Ovary (tissue), 10 donors: ENCODE measurements at regions of chr12 and their contacts with region 1.

Region 1: GRCh38 chr12:22083167-22083566 is 37.1 kb downstream of the CMAS start:
- DNase-seq: peak in 1 of 5 donors; percentile 27
- H3K4me3 ChIP-seq: no peak overlapping the region
- H3K27ac ChIP-seq: no peak overlapping the region
- H3K4me1 ChIP-seq: no peaks in the 10 kb centered on the region
- H3K27me3 ChIP-seq: no peaks in the 10 kb centered on the region
- CTCF ChIP-seq: peak in 2 of 3 donors; percentile 51 to 54
- EP300 ChIP-seq: no peak
- POLR2A ChIP-seq: no peak

Region 2: DNA sequence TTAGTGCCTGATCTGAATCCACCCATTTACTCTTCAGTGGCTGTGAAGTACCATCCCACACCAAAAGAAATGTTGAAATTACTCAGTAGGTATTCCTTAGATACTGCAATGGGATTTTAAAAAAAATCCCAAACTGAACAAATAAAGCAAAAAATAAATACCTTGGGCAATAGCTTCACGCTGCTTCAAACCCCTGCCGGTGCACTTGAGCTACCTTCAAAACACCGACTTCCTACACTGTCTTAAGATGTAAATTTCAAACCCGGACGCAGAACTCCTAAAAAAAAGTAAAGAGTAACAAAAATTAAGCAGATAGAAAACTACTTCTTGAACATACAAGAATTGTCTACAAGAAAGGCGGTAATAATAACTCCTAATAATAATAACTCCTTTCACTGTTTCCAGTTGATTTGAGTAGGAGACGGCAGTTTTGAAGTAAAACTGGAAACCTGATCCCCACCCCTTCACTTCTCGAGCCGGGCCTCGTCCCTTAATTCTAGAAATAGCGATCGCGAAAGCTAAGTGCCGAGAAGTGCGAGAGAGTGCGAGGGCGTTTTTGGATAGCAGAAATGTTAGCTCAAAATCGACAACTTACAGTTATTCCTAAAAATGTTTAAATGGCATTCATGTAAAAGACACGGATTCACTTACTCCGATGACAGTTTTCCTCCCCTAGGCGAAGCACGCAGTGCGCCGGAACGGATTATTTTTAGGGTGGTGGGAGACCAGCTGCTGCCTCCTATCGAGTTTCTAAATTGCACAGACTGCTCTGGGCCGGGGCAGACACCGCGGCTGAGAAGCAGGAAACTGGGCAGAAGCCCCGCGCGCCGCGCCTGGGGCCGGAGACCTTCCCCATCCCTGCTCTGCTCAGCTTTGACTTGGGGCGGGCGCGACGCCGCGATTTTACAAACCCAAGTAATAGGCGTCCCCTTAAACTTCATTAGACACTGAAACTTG is 142.3 kb before region 1 on chr12 and contains the start of gene ABCC9:
- intact Hi-C with region 1: no loop called
- DNase-seq: peak; percentile 64 to 80 (median 72)
- H3K4me3 ChIP-seq: peak within 1 kb of the TSS; percentile 50
- H3K27ac ChIP-seq: peak within 1 kb of the TSS; percentile 73 to 75
- H3K4me1 ChIP-seq: peaks cover 2% of the 10 kb centered on the region
- H3K27me3 ChIP-seq: no peaks in the 10 kb centered on the region
- CTCF ChIP-seq: peak in 1 of 3 donors; percentile 18
- EP300 ChIP-seq: no peak
- POLR2A ChIP-seq: peak; percentile 40
- total RNA-seq, gene ABCC9: 15.6 to 54.8 (median 21.3) TPM

Region 3: GRCh38 chr12:22051114-22051698 is 32.0 kb before region 1 on chr12:
- intact Hi-C with region 1: no loop called
- DNase-seq: no peak
- H3K4me3 ChIP-seq: no peak overlapping the region
- H3K27ac ChIP-seq: no peak overlapping the region
- H3K4me1 ChIP-seq: peaks cover 5% of the 10 kb centered on the region
- H3K27me3 ChIP-seq: no peaks in the 10 kb centered on the region
- CTCF ChIP-seq: no peak
- EP300 ChIP-seq: no peak
- POLR2A ChIP-seq: no peak

Region 4: GRCh38 chr12:22130671-22131070 is 47.5 kb after region 1 on chr12:
- intact Hi-C with region 1: no loop called
- DNase-seq: no peak
- H3K4me3 ChIP-seq: no peak overlapping the region
- H3K27ac ChIP-seq: no peak overlapping the region
- H3K4me1 ChIP-seq: no peaks in the 10 kb centered on the region
- H3K27me3 ChIP-seq: no peaks in the 10 kb centered on the region
- CTCF ChIP-seq: no peak
- EP300 ChIP-seq: no peak
- POLR2A ChIP-seq: no peak

Region 5: DNA sequence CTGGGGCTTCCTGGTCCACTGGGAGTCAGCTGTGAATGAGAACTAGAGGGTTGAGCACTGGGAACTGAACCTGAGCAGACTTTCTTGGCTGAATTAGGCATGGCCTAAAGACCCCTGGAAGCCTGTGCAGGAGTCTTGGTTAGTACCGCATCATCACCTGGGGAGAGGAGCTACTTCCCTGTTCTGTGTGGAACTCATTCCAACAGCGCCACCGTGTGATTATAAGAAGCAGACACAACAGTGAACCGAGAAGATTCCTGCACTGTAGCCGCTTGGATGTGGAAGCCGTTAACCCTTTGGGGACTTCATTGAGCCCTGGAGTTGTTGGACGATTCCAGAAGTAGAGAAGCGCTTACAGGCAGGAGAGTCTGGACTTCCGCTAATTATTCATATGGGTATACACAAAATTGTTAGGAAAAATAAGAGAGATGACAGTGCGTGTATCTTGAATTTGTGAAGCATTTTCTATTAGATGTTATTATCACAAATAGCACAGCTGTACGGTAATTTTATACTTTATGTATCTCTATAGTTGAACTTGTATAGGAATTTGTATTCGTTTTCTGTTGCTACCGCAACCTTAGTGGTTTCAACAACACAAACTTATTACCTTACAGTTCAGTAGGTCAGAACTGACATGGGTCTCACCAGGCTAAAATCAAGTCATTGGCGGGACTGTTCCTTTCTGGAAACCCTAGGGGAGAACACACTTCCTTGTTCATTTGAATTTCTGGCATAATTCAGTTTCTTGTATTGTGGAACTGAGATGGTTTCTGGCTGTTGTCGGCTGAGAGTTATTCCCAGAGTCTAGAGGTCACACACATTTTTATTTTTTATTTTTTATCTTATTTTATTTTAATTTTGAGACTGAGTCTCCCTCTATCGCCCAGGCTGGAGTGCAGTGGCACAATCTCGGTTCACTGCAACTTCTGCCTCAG is 360.5 kb after region 1 on chr12:
- intact Hi-C with region 1: loop called in 3 of 4 experiments (anchors 5 to 10 kb)
- DNase-seq: peak; percentile 42 to 63 (median 47)
- H3K4me3 ChIP-seq: no peak overlapping the region
- H3K27ac ChIP-seq: no peak overlapping the region
- H3K4me1 ChIP-seq: no peaks in the 10 kb centered on the region
- H3K27me3 ChIP-seq: no peaks in the 10 kb centered on the region
- CTCF ChIP-seq: peak; percentile 43 to 59 (median 52)
- EP300 ChIP-seq: no peak
- POLR2A ChIP-seq: no peak